ENCODE measurements at regions of chr7 and their contacts with region 1.

Region 1: DNA sequence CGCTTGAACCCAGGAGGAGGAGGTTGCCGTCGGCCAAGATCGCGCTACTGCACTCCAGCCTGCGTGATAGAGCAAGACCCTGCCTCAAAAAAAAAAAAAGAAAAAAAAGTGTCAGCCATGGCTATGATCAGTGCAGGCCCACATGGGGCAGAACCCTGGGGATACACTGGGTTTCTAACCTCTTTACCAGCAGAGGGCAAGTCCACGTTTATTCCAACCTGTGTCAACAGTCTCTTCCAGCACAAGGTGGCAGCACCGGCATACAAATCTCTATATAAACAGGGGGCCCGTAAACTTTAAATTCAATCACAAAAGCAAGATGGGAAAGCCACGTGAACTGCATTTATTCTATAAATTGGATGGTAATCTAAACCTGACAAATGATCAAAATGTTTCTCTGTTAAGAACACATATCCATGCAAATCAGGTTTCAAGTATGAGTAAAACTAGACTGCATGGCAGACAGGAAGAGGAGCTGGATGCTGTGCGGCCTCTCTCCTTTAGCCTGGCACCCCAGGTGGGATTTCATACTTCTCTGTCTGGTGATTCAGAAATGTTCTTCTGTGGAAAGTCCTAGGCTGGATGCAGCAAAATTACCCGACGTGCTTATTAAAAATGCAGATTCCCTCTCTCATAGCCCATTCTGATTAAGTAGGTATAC is 60.0 kb upstream of the STEAP1B start:
- DNase-seq: peak; percentile 86
- ATAC-seq: peak; percentile 47
- H3K4me3 ChIP-seq: no peak overlapping the region
- H3K27ac ChIP-seq: peak overlapping the region; percentile 90; the same call in 1 of the 2 replicates
- H3K4me1 ChIP-seq: peaks cover 31% of the 10 kb centered on the region
- H3K27me3 ChIP-seq: no peaks in the 10 kb centered on the region; the same call in 1 of the 2 replicates
- CTCF ChIP-seq: peak; percentile 99
- POLR2A ChIP-seq: no peak
- RAD21 ChIP-seq: peak; percentile 99

Region 2: DNA sequence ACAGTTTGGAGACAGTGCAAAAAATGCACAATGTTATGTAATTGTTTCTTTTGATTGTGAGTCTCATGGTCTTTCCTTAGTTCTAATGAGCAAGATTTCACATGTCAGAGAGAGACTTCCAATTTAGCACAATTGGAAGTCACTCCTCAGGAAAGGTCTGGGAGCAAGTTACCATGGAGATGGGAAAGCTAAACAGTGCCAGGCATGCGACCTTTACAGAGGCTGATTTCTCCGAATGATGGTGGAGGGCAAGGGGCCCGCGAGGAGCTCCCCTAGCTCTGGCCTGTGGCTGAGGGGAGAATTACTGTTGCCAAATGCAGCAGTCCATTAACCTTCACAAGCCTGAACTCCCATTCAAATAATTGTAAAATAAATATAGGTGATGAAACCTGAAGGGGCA is 673.6 kb before region 1 on chr7:
- CTCF ChIA-PET with region 1: no interaction called
- POLR2A ChIA-PET with region 1: no interaction called
- dilution Hi-C with region 1: no loop called
- in situ Hi-C with region 1: no loop called
- intact Hi-C with region 1: no loop called
- DNase-seq: no peak
- ATAC-seq: no peak
- H3K4me3 ChIP-seq: no peak overlapping the region
- H3K27ac ChIP-seq: no peak overlapping the region
- H3K4me1 ChIP-seq: no peaks in the 10 kb centered on the region
- H3K27me3 ChIP-seq: no peaks in the 10 kb centered on the region
- CTCF ChIP-seq: no peak
- POLR2A ChIP-seq: no peak
- RAD21 ChIP-seq: no peak

Region 3: GRCh38 chr7:22542254-22542653 is 17.7 kb before region 1 on chr7:
- CTCF ChIA-PET with region 1: no interaction called
- POLR2A ChIA-PET with region 1: no interaction called
- dilution Hi-C with region 1: no loop called
- in situ Hi-C with region 1: no loop called
- intact Hi-C with region 1: no loop called
- DNase-seq: no peak
- ATAC-seq: no peak
- H3K4me3 ChIP-seq: no peak overlapping the region
- H3K27ac ChIP-seq: no peak overlapping the region
- H3K4me1 ChIP-seq: no peaks in the 10 kb centered on the region
- H3K27me3 ChIP-seq: peaks cover 22% of the 10 kb centered on the region
- CTCF ChIP-seq: no peak
- POLR2A ChIP-seq: no peak
- RAD21 ChIP-seq: no peak

Region 4: GRCh38 chr7:22577396-22578001 is 17.5 kb after region 1 on chr7:
- CTCF ChIA-PET with region 1: interaction called, 5 read pairs
- POLR2A ChIA-PET with region 1: interaction called, 8 read pairs
- dilution Hi-C with region 1: no loop called
- in situ Hi-C with region 1: no loop called
- intact Hi-C with region 1: loop called (anchors 1 kb)
- DNase-seq: peak; percentile 98
- ATAC-seq: peak; percentile 88
- H3K4me3 ChIP-seq: no peak overlapping the region
- H3K27ac ChIP-seq: peak overlapping the region; percentile 85
- H3K4me1 ChIP-seq: peaks cover 9% of the 10 kb centered on the region
- H3K27me3 ChIP-seq: no peaks in the 10 kb centered on the region
- CTCF ChIP-seq: no peak
- POLR2A ChIP-seq: no peak
- RAD21 ChIP-seq: peak; percentile 11; the same call in 1 of the 2 replicates

Region 5: GRCh38 chr7:22660732-22661131 is 100.8 kb after region 1 on chr7:
- CTCF ChIA-PET with region 1: no interaction called
- POLR2A ChIA-PET with region 1: no interaction called
- dilution Hi-C with region 1: no loop called
- in situ Hi-C with region 1: no loop called
- intact Hi-C with region 1: loop called (anchors 5 kb)
- DNase-seq: no peak
- ATAC-seq: no peak
- H3K4me3 ChIP-seq: no peak overlapping the region
- H3K27ac ChIP-seq: no peak overlapping the region
- H3K4me1 ChIP-seq: peaks cover 12% of the 10 kb centered on the region
- H3K27me3 ChIP-seq: no peaks in the 10 kb centered on the region
- CTCF ChIP-seq: no peak
- POLR2A ChIP-seq: no peak
- RAD21 ChIP-seq: no peak

Region 6: DNA sequence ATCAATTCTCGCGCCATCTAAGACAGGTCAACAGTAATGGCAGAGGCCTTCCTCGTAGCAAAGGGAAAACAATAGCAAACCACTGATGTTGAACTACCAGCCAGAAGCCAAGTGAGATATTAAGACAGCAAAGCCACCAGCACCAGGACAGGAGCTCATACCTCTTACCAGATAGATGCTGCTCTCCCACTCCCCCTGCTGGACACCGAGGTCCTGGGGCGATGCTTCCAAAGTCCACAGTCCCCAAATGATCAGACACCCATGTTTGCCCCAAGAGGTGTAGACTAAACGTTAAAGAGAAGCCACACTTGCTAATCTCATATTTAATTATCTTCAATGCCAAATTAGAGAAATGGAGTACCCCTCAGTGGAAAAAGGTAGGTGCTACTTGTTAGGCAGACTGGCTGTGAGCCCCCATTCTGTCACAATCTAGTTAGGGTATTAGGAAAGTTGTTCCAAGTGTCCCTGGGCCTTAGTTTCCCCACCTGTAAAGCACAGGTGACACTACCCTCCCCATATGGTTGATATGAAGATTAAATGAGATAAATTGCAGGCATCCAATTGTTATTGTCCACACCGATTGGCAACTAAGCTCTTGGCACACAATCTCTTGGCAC is 222.8 kb after region 1 on chr7:
- CTCF ChIA-PET with region 1: no interaction called
- POLR2A ChIA-PET with region 1: no interaction called
- dilution Hi-C with region 1: no loop called
- in situ Hi-C with region 1: no loop called
- intact Hi-C with region 1: loop called (anchors 1 kb)
- DNase-seq: peak; percentile 54
- ATAC-seq: peak; percentile 50; the same call in 1 of the 2 replicates
- H3K4me3 ChIP-seq: no peak overlapping the region
- H3K27ac ChIP-seq: peak overlapping the region; percentile 98
- H3K4me1 ChIP-seq: peaks cover 9% of the 10 kb centered on the region
- H3K27me3 ChIP-seq: no peaks in the 10 kb centered on the region
- CTCF ChIP-seq: peak; percentile 63
- POLR2A ChIP-seq: no peak
- RAD21 ChIP-seq: peak; percentile 55

Region 7: DNA sequence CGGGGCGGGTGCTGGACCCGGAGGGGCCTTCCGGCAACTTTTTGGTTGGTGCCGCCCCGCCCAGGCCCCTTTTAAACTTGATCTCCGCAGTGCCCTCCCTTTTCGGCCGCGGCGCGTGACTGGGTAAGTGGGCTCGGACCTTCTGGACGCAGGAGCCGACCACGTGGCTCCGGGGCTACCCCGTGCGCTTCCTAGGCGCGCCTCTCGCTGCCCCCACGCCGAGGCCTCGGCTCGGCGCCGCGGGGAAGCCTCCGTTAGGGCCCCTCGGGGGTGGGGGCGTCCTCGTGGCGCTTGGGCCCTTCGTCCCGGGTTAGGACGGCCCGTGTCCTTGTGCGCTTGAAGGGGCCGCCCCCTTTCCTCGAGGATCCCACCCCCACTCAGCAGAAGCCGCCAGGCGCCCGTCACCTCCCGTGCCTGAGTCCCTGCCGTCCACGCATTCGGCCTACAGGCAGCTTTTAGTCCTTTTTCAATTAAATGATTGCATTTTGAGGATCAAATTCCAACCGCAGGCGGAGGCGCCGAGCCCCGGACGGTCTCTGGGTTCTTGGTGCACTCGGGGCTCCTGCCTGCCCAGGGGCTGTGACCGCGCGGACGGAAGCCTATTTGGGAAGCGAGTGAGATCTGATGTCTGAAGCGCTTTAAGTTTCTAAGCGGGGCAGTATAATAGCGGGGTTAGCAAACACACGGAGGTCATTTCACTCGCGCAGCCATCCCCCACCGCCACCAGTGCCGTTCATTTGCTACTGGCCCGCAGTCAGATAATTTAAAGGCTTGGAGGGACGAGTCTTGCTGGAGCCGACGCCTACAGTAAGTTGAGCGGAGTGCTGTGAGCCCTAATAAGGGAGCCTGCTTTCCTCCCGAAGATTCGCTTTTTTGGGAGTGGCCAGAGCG is 294.4 kb after region 1 on chr7:
- CTCF ChIA-PET with region 1: interaction called, 6 read pairs
- POLR2A ChIA-PET with region 1: interaction called, 10 read pairs
- dilution Hi-C with region 1: no loop called
- in situ Hi-C with region 1: no loop called
- intact Hi-C with region 1: loop called (anchors 1 kb)
- DNase-seq: peak; percentile 89
- ATAC-seq: peak; percentile 78
- H3K4me3 ChIP-seq: peak overlapping the region; percentile 68
- H3K27ac ChIP-seq: peak overlapping the region; percentile 80
- H3K4me1 ChIP-seq: peaks cover 11% of the 10 kb centered on the region
- H3K27me3 ChIP-seq: no peaks in the 10 kb centered on the region
- CTCF ChIP-seq: no peak
- POLR2A ChIP-seq: peak; percentile 91
- RAD21 ChIP-seq: no peak; the same call in 1 of the 2 replicates

Region 8: DNA sequence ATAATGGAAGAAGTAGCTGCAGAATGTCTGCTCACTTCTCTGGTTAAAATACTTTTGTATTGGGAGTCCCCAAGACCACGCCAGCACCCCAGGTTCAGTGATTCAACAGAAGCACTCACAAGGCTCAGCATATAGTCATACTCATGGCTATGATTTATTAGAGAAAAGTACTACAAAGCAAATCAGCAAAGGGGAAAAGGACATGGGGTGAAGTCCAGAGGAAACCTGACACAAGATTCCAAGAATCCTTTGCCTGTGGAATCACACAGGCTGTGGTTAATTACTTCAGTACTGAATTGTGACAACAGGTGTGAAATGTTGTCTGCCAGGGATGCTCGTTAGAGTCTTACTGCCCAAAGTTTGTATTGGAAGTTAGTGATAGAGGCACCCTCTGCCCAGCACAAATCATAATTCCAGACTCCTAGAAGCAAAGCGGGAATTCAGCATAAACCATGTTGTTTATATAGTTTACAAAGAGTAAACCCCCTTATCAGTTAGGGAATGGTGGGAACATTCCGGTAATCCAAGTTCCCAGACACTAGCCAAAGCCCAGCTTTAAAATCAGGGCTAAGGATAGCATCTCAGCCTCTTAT is 374.6 kb after region 1 on chr7:
- CTCF ChIA-PET with region 1: no interaction called
- POLR2A ChIA-PET with region 1: no interaction called
- dilution Hi-C with region 1: no loop called
- in situ Hi-C with region 1: no loop called
- intact Hi-C with region 1: loop called (anchors 5 kb)
- DNase-seq: peak; percentile 69
- ATAC-seq: peak; percentile 56
- H3K4me3 ChIP-seq: no peak overlapping the region
- H3K27ac ChIP-seq: peak overlapping the region; percentile 29; the same call in 1 of the 2 replicates
- H3K4me1 ChIP-seq: peaks cover 8% of the 10 kb centered on the region
- H3K27me3 ChIP-seq: no peaks in the 10 kb centered on the region
- CTCF ChIP-seq: no peak
- POLR2A ChIP-seq: no peak
- RAD21 ChIP-seq: no peak

Region 9: DNA sequence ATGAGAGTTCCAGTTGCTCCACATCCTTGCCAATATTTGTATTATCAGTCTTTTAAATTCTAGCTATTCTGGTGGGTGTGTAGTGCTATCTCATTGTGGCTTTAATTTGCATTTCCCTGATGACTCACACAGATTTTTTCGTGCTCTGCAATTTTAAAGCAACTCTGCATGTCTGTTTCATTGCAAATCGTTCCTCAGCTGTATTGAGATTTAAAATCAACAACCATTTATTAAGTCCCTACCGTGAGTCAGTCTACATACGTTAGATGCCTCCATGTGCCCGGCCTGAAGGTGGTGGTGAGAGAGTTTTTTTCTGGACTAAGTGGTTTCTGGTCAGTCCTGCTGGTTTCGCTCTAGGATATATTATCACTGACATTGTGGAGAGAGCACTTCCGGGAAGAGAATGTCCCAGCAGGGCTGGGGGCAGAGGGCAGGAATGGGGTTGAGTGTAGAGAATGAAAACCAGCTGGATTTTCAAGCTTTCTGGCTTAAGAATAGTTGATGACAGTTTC is 462.4 kb after region 1 on chr7:
- CTCF ChIA-PET with region 1: no interaction called
- POLR2A ChIA-PET with region 1: no interaction called
- dilution Hi-C with region 1: no loop called
- in situ Hi-C with region 1: no loop called
- intact Hi-C with region 1: no loop called
- DNase-seq: peak; percentile 95
- ATAC-seq: peak; percentile 73
- H3K4me3 ChIP-seq: no peak overlapping the region
- H3K27ac ChIP-seq: peak overlapping the region; percentile 47; the same call in 1 of the 2 replicates
- H3K4me1 ChIP-seq: peaks cover 15% of the 10 kb centered on the region
- H3K27me3 ChIP-seq: no peaks in the 10 kb centered on the region
- CTCF ChIP-seq: no peak
- POLR2A ChIP-seq: no peak
- RAD21 ChIP-seq: no peak

Measured in IMR-90 (cell line).